ENCODE measurements at regions of chr3 and their contacts with region 1.

Region 1: DNA sequence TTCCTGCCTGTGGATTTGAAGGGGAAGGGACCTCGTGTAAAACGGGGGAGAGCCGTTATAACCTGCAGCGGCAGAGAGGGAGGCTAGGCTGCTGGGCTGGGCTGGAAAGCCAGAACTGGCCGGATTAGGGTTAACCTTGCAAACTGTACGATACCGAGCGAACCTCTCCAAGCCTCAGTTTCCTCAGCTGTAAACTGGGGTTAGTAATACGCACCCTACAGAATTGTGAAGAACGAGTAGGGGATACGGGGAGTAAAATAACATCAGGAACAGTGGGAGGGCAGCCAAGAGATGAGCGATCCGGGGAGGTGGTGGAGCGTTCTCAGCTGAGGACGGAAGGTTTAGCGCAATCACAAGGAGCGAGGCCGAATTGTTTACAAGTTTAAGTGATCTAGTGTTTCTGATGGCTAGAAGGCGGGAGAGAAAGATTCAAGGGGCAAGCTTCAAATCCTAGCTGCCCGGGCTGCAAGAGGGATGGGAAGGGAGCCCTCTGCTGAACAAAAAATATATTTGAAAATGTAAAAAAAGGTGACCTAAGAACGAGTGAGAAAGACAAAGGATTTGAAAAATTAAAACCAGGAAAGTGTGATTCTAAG is 768 bp upstream of the SEMA5B start:
- DNase-seq: peak; percentile 19
- ATAC-seq: peak; percentile 50
- H3K4me3 Mint-ChIP-seq: peak overlapping the region; percentile 83
- H3K27ac Mint-ChIP-seq: no peak overlapping the region
- H3K4me1 Mint-ChIP-seq: peaks cover 19% of the 10 kb centered on the region
- H3K27me3 Mint-ChIP-seq: peaks cover 37% of the 10 kb centered on the region
- CTCF ChIP-seq: no peak

Region 2: GRCh38 chr3:122392868-122393844 is 635.2 kb before region 1 on chr3:
- CTCF ChIA-PET with region 1: interaction called, 18 read pairs
- POLR2A ChIA-PET with region 1: interaction called, 5 read pairs
- intact Hi-C with region 1: loop called (anchors 1 kb)
- DNase-seq: no peak
- ATAC-seq: no peak
- H3K4me3 Mint-ChIP-seq: no peak overlapping the region
- H3K27ac Mint-ChIP-seq: no peak overlapping the region
- H3K4me1 Mint-ChIP-seq: peaks cover 15% of the 10 kb centered on the region
- H3K27me3 Mint-ChIP-seq: no peaks in the 10 kb centered on the region
- CTCF ChIP-seq: peak; percentile 87

Region 3: GRCh38 chr3:122754929-122755328 is 273.4 kb before region 1 on chr3:
- CTCF ChIA-PET with region 1: interaction called, 16 read pairs
- POLR2A ChIA-PET with region 1: no interaction called
- intact Hi-C with region 1: loop called (anchors 1 kb)
- DNase-seq: no peak
- ATAC-seq: peak; percentile 79
- H3K4me3 Mint-ChIP-seq: no peak overlapping the region
- H3K27ac Mint-ChIP-seq: no peak overlapping the region
- H3K4me1 Mint-ChIP-seq: no peaks in the 10 kb centered on the region
- H3K27me3 Mint-ChIP-seq: no peaks in the 10 kb centered on the region
- CTCF ChIP-seq: peak; percentile 54

Region 4: DNA sequence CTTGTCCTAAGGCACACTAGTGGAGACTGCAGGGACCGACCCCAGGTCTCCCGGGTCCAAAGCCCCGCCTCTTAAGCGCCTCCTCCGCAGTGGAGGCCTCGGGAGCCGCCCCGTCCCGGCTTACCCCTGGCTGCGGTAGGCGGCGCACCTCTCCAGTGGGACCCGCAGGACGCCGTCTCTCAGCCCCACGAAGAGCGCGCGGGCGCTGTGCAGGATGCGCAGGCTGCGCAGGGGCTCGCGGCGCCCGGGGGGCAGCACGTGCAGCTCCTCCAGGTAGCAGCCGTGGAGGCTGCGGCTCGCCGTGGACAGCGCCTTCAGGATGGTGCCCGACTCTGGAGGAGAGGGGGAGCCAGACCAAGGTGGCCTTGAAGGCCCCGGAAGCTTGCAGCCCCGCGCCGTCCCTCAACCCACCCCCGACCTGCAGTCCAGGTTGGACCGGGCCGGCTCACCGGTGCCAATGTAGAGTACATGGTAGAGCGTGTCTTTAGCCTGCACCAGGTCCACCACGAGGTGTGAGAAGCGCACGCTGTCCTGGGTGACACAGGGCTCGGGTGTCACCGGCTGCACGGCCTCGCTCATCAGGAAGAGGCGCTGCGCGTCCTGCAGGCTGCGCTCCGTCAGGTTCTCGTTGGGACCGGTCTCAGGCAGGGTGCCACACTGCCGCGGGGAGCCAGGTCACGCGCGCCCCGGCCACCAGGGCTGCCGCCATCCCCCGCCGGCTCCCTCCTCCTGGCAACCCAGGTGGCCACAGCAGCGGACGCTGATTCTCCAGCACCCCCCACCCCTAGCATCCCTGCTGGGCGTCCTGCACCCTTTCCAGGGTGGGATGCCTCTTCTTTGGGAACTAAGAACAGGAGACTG is 106.3 kb before region 1 on chr3:
- CTCF ChIA-PET with region 1: interaction called, 3 read pairs
- POLR2A ChIA-PET with region 1: no interaction called
- intact Hi-C with region 1: loop called (anchors 1 kb)
- DNase-seq: peak; percentile 35
- ATAC-seq: peak; percentile 91
- H3K4me3 Mint-ChIP-seq: peak overlapping the region; percentile 66
- H3K27ac Mint-ChIP-seq: no peak overlapping the region
- H3K4me1 Mint-ChIP-seq: peaks cover 8% of the 10 kb centered on the region
- H3K27me3 Mint-ChIP-seq: peaks cover 13% of the 10 kb centered on the region
- CTCF ChIP-seq: no peak

Region 5: DNA sequence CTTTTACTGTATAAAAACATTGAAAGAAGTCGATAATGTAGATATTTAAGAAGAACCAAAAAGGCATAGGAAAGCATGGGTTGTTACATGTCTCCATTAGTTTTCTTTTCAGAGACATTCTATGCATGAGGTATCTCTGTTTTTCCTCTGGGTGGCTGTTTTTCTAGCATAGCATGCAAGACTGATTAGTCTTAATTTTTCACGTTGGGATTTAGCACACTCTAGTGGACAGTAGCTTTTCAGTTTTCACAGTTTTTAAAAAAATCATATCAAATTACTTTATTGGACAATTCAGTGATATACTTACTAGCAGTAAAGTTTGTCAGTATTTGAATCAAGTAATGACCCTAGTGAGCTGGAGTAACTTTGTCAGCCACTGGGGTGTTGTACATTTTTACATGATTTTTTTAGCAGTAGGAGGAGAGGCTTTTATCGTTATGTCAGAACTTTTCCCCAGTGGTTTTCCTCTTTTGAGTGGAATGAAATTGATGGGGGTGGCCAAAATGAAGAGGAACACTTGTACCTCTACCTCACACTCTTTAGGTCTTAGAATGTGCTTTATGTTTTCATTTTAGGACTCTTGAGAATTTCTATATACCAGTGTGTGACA is 230.6 kb after region 1 on chr3:
- CTCF ChIA-PET with region 1: no interaction called
- POLR2A ChIA-PET with region 1: no interaction called
- intact Hi-C with region 1: loop called (anchors 2 kb)
- DNase-seq: no peak
- ATAC-seq: peak; percentile 47
- H3K4me3 Mint-ChIP-seq: no peak overlapping the region
- H3K27ac Mint-ChIP-seq: no peak overlapping the region
- H3K4me1 Mint-ChIP-seq: no peaks in the 10 kb centered on the region
- H3K27me3 Mint-ChIP-seq: no peaks in the 10 kb centered on the region
- CTCF ChIP-seq: no peak

Measured in activated B cell treated with CpG ODN at 0.5 μM for 24 hours (primary cell).